Activated B cell treated with CpG ODN at 0.5 μM for 24 hours (primary cell): ENCODE measurements at regions of chr19 and their contacts with region 1.

Region 1: DNA sequence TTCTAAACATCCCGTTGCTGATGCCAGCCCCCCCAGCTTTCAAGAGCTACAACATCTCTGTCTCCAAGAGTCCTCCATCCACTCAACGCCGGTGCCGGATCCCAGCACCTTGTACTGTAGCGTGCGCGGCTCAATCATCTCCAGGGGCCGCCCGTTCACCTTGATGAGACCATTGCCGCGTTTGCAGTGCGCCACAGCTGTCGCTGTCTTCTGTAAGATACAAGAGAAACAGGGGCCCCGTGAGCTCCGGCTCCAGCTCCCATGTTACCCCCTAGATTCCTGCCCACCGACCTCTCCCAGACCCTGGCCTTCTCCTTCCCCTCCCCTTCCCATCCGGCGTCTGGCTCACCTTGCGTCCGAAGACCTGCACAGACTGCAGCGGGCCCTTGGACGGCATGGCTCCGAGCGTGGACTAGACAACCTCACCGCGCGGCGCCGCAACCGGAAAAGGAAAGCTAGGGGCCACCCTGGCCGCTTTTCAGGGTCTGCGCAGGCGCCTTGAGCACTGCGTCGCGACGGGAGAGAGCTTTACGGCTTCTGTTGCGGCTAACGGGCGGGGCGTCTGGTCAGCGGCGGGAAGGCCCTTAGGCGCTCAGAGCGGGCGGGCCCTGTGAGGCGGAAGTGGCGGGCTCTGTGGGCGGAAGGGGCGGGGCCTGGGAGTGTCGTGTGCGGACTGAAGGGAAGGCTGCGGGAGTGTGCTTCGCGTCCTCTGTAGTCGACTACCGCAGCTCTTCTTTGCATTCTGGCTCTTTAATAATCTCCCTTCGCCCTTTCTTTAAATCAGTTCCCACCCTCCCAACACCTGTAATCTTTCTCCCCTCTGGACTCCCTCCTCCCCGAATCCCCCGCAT is at the start of gene RPS16:
- DNase-seq: peak; percentile 98
- ATAC-seq: peak; percentile 92
- H3K4me3 Mint-ChIP-seq: peak within 1 kb of the TSS; percentile 98
- H3K27ac Mint-ChIP-seq: peak within 1 kb of the TSS; percentile 96
- H3K4me1 Mint-ChIP-seq: peaks cover 53% of the 10 kb centered on the region
- H3K27me3 Mint-ChIP-seq: no peaks in the 10 kb centered on the region
- CTCF ChIP-seq: no peak
- total RNA-seq, gene RPS16: 4,002 and 4,656 TPM in 2 replicates

Region 2: GRCh38 chr19:39335168-39335548 is 100.6 kb before region 1 on chr19:
- CTCF ChIA-PET with region 1: no interaction called
- POLR2A ChIA-PET with region 1: interaction called, 12 read pairs
- intact Hi-C with region 1: loop called (anchors 5 kb)
- DNase-seq: no peak
- ATAC-seq: peak; percentile 22
- H3K4me3 Mint-ChIP-seq: peak overlapping the region; percentile 94
- H3K27ac Mint-ChIP-seq: peak overlapping the region; percentile 95
- H3K4me1 Mint-ChIP-seq: peaks cover 61% of the 10 kb centered on the region
- H3K27me3 Mint-ChIP-seq: no peaks in the 10 kb centered on the region
- CTCF ChIP-seq: no peak

Region 3: GRCh38 chr19:39341719-39342604 is 93.8 kb before region 1 on chr19 and contains the start of gene SAMD4B:
- CTCF ChIA-PET with region 1: interaction called, 4 read pairs
- POLR2A ChIA-PET with region 1: interaction called, 35 read pairs
- intact Hi-C with region 1: loop called (anchors 5 kb)
- DNase-seq: peak; percentile 97
- ATAC-seq: peak; percentile 91
- H3K4me3 Mint-ChIP-seq: peak within 1 kb of the TSS; percentile 99
- H3K27ac Mint-ChIP-seq: peak within 1 kb of the TSS; percentile 97
- H3K4me1 Mint-ChIP-seq: peaks cover 69% of the 10 kb centered on the region
- H3K27me3 Mint-ChIP-seq: no peaks in the 10 kb centered on the region
- CTCF ChIP-seq: no peak
- total RNA-seq, gene SAMD4B: 53.0 and 60.7 TPM in 2 replicates

Region 4: DNA sequence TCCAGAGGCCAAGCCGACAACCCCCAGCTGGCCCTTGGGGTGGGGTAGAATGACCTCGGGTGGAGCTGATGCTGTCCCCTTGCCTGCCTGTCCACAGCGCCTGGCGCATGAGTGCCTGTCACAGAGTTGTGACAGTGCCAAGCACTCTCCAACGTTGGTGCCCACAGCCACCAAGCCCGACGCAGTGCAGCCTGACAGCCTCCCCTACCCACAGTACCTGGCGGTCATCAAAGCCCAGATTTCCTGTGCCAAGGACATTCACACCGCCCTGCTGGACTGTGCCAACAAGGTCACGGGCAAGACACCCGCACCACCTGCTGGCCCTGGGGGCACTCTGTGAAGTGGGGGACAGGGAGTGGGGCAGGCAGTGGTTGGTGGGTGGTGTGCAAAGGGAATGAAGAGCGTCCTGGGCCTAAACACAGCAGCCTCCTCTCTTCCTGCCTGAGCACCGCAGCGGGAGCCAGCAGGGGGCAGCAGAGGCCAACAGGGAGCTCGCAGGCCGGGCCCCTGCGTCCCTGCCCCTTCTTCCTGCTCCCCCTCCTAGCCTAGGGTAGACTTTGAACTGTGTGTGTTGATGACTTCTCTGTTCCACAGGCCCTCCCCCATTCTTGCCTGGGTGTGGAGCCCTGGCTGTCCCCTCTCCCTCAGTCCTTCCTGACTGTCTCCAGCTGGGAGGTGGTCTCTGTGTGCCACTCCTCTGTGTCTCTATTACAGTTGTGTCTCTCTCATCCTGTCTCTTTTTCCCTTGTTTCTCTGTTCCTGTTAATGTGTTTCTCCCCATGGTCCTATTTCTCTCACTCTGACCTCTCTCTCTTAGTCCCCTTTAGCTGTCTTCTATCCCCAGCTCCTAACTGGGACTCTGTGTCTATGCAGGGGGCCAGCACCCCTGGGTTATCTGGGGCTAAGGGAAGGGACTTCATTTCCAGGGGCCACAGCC is 38.1 kb before region 1 on chr19:
- CTCF ChIA-PET with region 1: interaction called, 6 read pairs
- POLR2A ChIA-PET with region 1: interaction called, 74 read pairs
- intact Hi-C with region 1: no loop called
- DNase-seq: peak; percentile 91
- ATAC-seq: peak; percentile 59
- H3K4me3 Mint-ChIP-seq: peak overlapping the region; percentile 67
- H3K27ac Mint-ChIP-seq: peak overlapping the region; percentile 91
- H3K4me1 Mint-ChIP-seq: peaks cover 62% of the 10 kb centered on the region
- H3K27me3 Mint-ChIP-seq: no peaks in the 10 kb centered on the region
- CTCF ChIP-seq: peak; percentile 84

Region 5: DNA sequence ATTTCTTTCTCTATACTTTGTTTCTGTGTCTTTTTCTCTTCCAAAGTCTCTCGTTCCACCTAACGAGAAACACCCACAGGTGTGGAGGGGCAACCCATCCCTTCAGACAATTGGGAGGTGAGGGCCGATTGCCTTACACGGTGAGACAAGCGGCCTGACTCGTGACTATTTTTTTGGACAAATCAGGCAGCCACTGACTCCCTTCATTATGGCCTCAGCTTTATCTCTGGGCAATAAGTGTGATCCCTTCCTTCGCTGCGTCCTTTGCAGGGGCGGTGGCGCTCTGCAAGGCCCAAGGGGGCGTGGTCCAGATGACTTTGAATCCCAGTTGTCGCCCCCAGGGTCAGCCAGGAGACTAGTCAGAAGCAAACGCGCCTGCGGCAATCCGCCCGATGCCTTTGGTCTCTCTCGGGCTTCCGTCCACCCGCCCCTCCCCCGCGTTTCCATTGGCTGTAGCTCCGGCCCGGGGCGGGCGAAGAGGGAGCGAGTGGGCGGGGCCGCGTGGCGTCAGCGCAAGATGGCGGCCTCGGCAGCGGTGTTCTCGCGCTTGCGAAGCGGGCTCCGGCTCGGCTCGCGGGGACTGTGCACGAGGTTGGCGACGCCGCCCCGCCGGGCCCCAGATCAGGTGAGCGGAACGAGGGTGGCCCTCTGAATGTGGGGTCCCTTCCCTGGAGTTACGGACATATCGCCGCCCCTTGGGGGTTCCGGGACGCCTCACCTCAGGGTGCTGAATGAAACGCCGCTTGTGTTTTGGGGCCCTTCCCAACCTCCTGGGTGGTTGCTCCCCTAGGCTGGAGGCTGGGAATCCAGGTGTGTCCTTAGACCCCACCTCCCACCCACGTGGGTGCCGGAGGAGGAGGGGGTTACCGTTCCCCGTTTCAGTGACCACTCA is 44.9 kb after region 1 on chr19 and contains the start of gene TIMM50:
- CTCF ChIA-PET with region 1: no interaction called
- POLR2A ChIA-PET with region 1: interaction called, 18 read pairs
- intact Hi-C with region 1: no loop called
- DNase-seq: peak; percentile 98
- ATAC-seq: peak; percentile 99
- H3K4me3 Mint-ChIP-seq: peak within 1 kb of the TSS; percentile 91
- H3K27ac Mint-ChIP-seq: peak within 1 kb of the TSS; percentile 85
- H3K4me1 Mint-ChIP-seq: peaks cover 25% of the 10 kb centered on the region
- H3K27me3 Mint-ChIP-seq: no peaks in the 10 kb centered on the region
- CTCF ChIP-seq: no peak
- total RNA-seq, gene TIMM50: 63.8 and 68.9 TPM in 2 replicates